Heart left ventricle (tissue), 16 donors: ENCODE measurements at regions of chr4 and their contacts with region 1.

Region 1: DNA sequence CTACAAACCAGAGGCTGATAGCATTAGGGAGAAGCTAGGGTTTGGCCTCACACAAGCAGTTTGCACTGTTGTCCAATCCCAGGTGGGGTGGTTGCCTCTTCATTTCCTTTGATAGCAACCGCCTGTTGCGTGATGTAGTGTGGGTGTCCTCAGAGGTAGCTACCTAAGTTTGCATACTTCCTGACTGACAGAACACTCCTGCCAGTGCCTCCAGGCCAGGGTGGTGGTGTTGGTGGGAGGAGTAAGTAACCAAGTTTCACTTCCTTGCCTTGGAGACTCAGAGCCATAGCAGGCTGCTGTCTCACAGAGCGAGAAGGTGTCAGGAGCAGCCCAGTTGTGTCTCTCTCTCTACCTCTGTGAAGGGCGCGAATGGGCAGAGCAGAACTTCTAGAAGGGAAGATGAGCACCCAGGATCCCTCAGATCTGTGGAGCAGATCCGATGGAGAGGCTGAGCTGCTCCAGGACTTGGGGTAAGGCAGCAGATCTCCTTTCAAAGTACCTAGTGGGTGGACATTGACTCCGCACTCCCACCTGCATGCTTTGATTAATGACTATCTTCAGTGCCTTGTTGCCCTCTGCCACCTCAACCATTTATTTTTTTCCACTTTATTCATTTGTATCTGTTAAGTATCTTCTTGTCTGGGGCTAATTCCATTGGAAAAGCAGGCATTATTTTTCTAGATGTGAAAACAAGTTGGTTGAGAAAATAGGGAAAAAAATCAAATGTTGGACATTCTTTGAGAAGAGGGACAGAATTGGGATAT is at the start of gene DAPP1:
- DNase-seq: peak in 3 of 5 donors; percentile 27 to 60 (median 49)
- ATAC-seq: peak in 3 of 4 donors; percentile 59 to 74 (median 62)
- H3K4me3 ChIP-seq: peak within 1 kb of the TSS in 8 of 12 donors; percentile 3 to 64 (median 36)
- H3K27ac ChIP-seq: peak within 1 kb of the TSS in 1 of 12 donors; percentile 90
- H3K4me1 ChIP-seq: peaks cover 0 to 61% (median 0%) of the 10 kb centered on the region in 12 donors
- H3K27me3 ChIP-seq: no peaks in the 10 kb centered on the region
- CTCF ChIP-seq: no peak
- POLR2A ChIP-seq: no peak
- total RNA-seq, gene DAPP1: 0.19 to 7.5 (median 0.34) TPM

Region 2: GRCh38 chr4:99543461-99543860 is 273.3 kb before region 1 on chr4:
- intact Hi-C with region 1: no loop called
- DNase-seq: no peak
- ATAC-seq: no peak
- H3K4me3 ChIP-seq: no peak overlapping the region
- H3K27ac ChIP-seq: no peak overlapping the region
- H3K4me1 ChIP-seq: no peaks in the 10 kb centered on the region
- H3K27me3 ChIP-seq: no peaks in the 10 kb centered on the region
- CTCF ChIP-seq: no peak
- POLR2A ChIP-seq: no peak

Region 3: DNA sequence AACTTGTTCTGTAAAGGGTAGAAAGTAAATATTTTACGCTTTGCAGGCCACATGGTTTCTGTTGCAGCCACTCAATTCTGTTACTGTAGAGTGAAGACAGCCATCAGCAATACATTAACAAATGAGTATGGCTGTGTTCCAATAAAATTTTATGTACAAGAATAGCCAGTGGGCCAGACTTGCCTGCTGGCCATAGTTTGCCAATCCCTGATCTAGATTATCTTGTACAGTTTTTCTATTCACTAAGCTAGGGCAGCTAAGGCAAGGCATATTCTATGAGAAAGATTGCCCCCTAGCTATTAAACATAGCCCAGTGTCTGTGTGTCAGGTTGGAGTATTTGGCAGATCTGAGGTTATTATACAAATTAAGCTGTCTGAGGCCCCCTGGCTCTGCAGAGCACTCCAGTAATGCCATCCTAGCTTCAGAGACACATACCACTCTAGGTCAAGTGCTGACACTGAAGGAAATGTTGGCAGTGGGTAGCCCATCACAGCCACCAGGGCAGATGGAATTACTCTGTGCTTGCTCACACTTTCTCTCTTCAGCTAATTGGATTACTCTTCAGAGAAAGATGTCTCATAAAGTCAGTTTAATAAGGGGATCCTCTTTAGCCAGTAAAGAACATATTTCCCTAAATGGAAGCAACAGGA is 201.4 kb before region 1 on chr4:
- intact Hi-C with region 1: no loop called
- DNase-seq: peak in 3 of 5 donors; percentile 18 to 39 (median 33)
- ATAC-seq: peak; percentile 83 to 93 (median 92)
- H3K4me3 ChIP-seq: no peak overlapping the region
- H3K27ac ChIP-seq: peak overlapping the region in 7 of 12 donors; percentile 7 to 60 (median 27)
- H3K4me1 ChIP-seq: peaks cover 0 to 9% (median 0%) of the 10 kb centered on the region in 12 donors
- H3K27me3 ChIP-seq: no peaks in the 10 kb centered on the region
- CTCF ChIP-seq: peak in 6 of 12 donors; percentile 12 to 41 (median 18)
- POLR2A ChIP-seq: no peak

Region 4: GRCh38 chr4:99710681-99711345 is 105.9 kb before region 1 on chr4:
- intact Hi-C with region 1: no loop called
- DNase-seq: no peak
- ATAC-seq: peak in 1 of 4 donors; percentile 68
- H3K4me3 ChIP-seq: no peak overlapping the region
- H3K27ac ChIP-seq: no peak overlapping the region
- H3K4me1 ChIP-seq: peaks cover 0 to 11% (median 0%) of the 10 kb centered on the region in 12 donors
- H3K27me3 ChIP-seq: no peaks in the 10 kb centered on the region
- CTCF ChIP-seq: no peak
- POLR2A ChIP-seq: no peak

Region 5: DNA sequence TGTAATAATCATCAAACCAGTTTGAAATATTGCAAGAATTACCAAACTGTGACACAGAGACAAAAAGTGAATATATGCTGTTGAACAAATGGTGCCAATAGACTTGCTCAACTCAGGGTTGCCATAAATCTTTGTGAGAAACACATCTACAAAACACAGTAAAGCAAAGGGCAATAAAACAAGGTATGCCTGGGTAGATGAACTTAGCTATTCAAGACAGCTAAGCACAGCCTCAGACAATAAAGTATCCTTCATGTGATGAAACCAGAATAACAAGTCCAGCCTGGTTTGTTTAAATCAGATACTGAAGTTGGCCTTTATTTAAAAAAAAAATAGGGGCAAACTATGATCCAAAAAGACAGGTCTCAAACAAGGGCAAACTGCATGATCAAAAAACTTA is 58.3 kb after region 1 on chr4:
- intact Hi-C with region 1: loop called in 4 of 10 experiments (anchors 5 to 10 kb)
- DNase-seq: no peak
- ATAC-seq: no peak
- H3K4me3 ChIP-seq: no peak overlapping the region
- H3K27ac ChIP-seq: no peak overlapping the region
- H3K4me1 ChIP-seq: no peaks in the 10 kb centered on the region
- H3K27me3 ChIP-seq: no peaks in the 10 kb centered on the region
- CTCF ChIP-seq: no peak
- POLR2A ChIP-seq: no peak

Region 6: DNA sequence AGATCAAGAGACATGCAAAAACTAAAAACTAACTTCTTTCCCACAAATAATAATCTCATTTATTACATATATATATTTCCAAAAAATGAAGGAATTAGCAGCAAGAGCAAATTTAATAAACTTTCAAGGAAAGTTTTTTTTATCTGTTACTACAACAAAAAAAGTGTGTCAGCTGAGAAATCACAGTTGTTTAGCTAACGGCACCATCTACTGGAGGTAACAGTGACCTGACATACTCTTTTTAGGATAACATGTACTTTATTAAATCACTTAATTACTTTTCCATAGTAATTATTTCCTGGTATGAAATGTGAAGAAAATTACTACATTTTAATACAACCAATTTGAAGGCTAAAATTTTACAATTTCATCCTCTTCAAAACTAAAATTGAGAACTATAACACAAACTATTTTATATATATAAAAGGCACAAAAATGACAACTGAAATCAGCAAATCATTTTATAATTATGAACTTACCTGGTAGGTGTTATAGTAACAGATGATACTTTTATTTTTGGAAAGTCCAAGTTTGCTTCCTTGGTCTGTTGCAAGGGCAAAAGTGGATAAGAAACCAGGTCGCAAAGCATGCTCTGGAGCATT is 68.4 kb after region 1 on chr4:
- intact Hi-C with region 1: loop called in 5 of 10 experiments (anchors 5 to 10 kb)
- DNase-seq: no peak
- ATAC-seq: no peak
- H3K4me3 ChIP-seq: no peak overlapping the region
- H3K27ac ChIP-seq: no peak overlapping the region
- H3K4me1 ChIP-seq: peaks cover 0 to 10% (median under 1%) of the 10 kb centered on the region in 12 donors
- H3K27me3 ChIP-seq: no peaks in the 10 kb centered on the region
- CTCF ChIP-seq: peak; percentile 23 to 58 (median 40)
- POLR2A ChIP-seq: no peak

Region 7: DNA sequence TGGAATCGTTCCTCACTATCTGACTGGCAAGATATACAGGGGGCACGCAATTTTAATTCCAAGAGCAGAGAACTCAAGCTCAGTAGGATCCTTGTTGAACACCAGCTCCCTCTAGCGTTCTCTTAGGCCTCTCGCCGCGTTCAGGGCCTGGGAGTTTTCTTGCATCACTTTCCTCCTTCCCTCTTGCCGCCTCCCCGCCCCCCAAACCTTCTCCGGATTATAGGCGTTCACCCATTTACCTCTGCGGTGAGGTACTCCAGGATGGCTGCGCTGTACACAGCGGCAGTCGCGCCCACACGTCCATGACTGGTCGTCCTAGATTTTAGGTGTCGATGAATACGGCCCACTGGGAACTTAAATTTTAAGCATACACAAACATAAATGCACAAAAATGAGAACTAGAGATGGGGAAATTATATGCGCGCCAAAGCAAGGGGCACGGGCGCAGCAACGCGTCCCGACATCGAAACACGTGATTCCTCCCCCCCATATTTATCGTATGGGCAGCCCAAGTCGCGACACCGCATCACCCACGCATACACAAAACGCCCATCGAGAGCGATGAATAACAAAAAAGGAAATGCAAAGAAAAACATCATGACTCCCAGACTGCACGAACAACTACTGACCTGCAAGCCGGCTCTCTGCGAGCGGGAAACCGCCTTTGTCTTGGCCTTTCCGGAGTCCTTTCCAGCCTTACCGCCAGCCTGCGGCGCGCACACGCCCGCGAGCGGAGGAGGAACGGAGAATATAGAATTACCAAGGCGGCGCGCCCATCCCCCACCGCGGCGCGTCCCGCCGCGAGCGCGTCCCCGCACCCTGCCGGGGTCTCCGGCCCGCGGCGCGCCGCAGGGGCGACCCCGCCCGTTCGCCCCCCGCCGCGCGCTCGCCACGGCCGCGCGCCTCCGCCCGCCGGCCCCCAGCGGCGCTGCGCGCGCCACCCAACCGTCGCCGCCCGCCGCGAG is 132.6 kb after region 1 on chr4:
- intact Hi-C with region 1: loop called in 4 of 10 experiments (anchors 5 to 10 kb)
- DNase-seq: peak; percentile 84 to 90 (median 86)
- ATAC-seq: peak; percentile 14 to 48 (median 33)
- H3K4me3 ChIP-seq: peak overlapping the region; percentile 68 to 97 (median 85)
- H3K27ac ChIP-seq: peak overlapping the region; percentile 31 to 96 (median 88)
- H3K4me1 ChIP-seq: peaks cover 0 to 47% (median 33%) of the 10 kb centered on the region in 12 donors
- H3K27me3 ChIP-seq: no peaks in the 10 kb centered on the region
- CTCF ChIP-seq: peak; percentile 70 to 92 (median 84)
- POLR2A ChIP-seq: no peak